Heart right ventricle (tissue), 16 donors: ENCODE measurements at regions of chr2 and their contacts with region 1.

Region 1: DNA sequence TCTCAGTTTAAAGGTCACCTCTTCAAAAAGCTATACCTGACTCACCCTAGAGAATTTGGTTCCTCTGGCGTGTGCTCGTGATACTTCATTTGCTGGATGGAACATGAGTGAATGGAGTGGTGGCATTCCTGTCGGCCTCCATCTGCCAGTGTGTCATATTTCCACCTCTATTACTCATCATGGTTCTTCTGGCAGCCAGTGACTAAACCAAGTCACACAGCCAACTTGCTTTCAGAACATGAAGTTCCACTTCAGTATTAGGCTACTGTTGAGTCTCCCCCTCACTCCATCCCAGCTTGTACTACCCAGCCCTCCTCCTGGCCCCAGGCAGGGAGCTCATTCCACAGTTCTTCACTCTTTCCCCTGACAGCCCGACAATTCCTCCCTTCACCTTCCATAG is 169.8 kb downstream of the MREG start:
- DNase-seq: no peak
- ATAC-seq: peak in 4 of 8 donors; percentile 57 to 83 (median 72)
- H3K4me3 ChIP-seq: no peak overlapping the region
- H3K27ac ChIP-seq: peak overlapping the region in 1 of 10 donors; percentile 1
- H3K4me1 ChIP-seq: peaks cover 0 to 34% (median 0%) of the 10 kb centered on the region in 9 donors
- H3K27me3 ChIP-seq: no peaks in the 10 kb centered on the region
- CTCF ChIP-seq: no peak

Region 2: GRCh38 chr2:215435809-215436704 is 407.5 kb before region 1 on chr2 and contains the start of gene FN1:
- intact Hi-C with region 1: loop called in 2 of 10 experiments (anchors 10 kb)
- DNase-seq: peak; percentile 91 to 94
- ATAC-seq: peak; percentile 89 to 95 (median 91)
- H3K4me3 ChIP-seq: peak within 1 kb of the TSS; percentile 42 to 77 (median 64)
- H3K27ac ChIP-seq: peak within 1 kb of the TSS; percentile 85 to 99 (median 90)
- H3K4me1 ChIP-seq: peaks cover 0 to 32% (median 0%) of the 10 kb centered on the region in 9 donors
- H3K27me3 ChIP-seq: peaks cover 0 to 73% (median 4%) of the 10 kb centered on the region in 7 donors
- CTCF ChIP-seq: no peak
- total RNA-seq, gene FN1: 67.8 to 888 (median 136) TPM